Sigmoid colon (tissue), 7 donors: ENCODE measurements at regions of chr12 and their contacts with region 1.

Region 1: DNA sequence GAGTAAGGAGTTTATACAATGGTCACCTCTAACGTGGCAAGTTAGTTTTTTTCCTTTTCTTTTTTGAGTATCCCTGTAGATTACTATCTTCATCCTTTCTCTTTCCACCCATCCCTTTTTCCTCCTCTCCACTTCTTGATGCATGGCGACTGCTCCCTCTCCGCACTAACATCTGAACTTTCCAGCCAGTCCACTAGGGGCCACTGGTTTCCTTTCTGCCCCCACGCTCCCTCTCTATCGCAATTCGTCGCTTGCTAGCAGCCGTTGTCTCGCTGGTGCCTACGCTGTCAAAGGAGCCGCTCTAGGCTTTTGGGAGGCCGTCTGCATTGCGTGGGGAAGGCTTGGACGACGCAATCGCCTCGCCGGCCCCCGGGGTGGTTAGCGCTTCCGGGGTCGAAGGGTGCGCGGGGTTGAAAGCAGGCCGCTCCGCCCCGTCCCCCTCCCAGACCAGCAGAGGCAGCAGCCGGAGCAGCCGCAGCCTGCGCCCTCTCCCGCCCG is at the start of gene PCBP2:
- DNase-seq: peak; percentile 99
- H3K4me3 ChIP-seq: peak within 1 kb of the TSS; percentile 65 to 76 (median 70)
- H3K27ac ChIP-seq: peak within 1 kb of the TSS; percentile 90 to 98 (median 96)
- H3K4me1 ChIP-seq: peaks cover 0 to 26% (median 22%) of the 10 kb centered on the region in 4 donors
- H3K27me3 ChIP-seq: no peaks in the 10 kb centered on the region
- CTCF ChIP-seq: peak; percentile 77 to 97 (median 95)
- EP300 ChIP-seq: peak in 2 of 4 donors; percentile 47 to 48
- POLR2A ChIP-seq: peak; percentile 32 to 37
- total RNA-seq, gene PCBP2: 397 to 661 (median 417) TPM

Region 2: GRCh38 chr12:53492830-53493611 is 41.3 kb after region 1 on chr12:
- intact Hi-C with region 1: loop called (anchors 5 kb)
- DNase-seq: peak; percentile 97
- H3K4me3 ChIP-seq: peak overlapping the region; percentile 45 to 74 (median 64)
- H3K27ac ChIP-seq: peak overlapping the region; percentile 81 to 91 (median 84)
- H3K4me1 ChIP-seq: peaks cover 0 to 28% (median 22%) of the 10 kb centered on the region in 4 donors
- H3K27me3 ChIP-seq: no peaks in the 10 kb centered on the region
- CTCF ChIP-seq: no peak
- EP300 ChIP-seq: peak in 1 of 4 donors; percentile 34
- POLR2A ChIP-seq: peak; percentile 43 to 70

Region 3: DNA sequence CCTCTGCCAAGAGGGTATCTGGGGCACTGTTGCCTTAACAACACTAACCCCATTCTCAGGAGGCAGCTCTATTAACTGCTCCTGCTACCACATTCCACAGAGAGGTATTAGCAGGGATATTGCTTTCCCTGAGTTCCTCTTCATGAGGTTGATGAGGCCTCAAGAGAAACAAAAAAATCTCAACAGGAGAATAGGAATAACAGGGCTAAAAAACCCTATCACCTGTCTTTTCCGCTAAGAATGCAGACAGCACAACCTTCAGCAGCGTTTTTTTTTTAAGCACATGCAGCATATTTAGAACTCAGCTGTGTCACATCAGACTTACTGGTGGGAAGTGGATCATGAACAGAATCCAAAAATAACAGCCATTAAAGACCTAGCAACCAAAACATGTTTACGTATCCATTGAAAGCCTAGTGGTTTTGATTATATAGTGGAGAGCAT is 145.2 kb after region 1 on chr12:
- intact Hi-C with region 1: no loop called
- DNase-seq: no peak
- H3K4me3 ChIP-seq: no peak overlapping the region
- H3K27ac ChIP-seq: peak overlapping the region in 3 of 4 donors; percentile 65 to 73 (median 67)
- H3K4me1 ChIP-seq: peaks cover 0 to 70% (median 51%) of the 10 kb centered on the region in 4 donors
- H3K27me3 ChIP-seq: no peaks in the 10 kb centered on the region
- CTCF ChIP-seq: no peak
- EP300 ChIP-seq: no peak
- POLR2A ChIP-seq: no peak